Posterior cingulate gyrus (tissue), 11 donors: ENCODE measurements at regions of chr10 and their contacts with region 1.

Region 1: GRCh38 chr10:5519054-5519453 is 5.7 kb upstream of the CALML3 start:
- DNase-seq: no peak

Region 2: DNA sequence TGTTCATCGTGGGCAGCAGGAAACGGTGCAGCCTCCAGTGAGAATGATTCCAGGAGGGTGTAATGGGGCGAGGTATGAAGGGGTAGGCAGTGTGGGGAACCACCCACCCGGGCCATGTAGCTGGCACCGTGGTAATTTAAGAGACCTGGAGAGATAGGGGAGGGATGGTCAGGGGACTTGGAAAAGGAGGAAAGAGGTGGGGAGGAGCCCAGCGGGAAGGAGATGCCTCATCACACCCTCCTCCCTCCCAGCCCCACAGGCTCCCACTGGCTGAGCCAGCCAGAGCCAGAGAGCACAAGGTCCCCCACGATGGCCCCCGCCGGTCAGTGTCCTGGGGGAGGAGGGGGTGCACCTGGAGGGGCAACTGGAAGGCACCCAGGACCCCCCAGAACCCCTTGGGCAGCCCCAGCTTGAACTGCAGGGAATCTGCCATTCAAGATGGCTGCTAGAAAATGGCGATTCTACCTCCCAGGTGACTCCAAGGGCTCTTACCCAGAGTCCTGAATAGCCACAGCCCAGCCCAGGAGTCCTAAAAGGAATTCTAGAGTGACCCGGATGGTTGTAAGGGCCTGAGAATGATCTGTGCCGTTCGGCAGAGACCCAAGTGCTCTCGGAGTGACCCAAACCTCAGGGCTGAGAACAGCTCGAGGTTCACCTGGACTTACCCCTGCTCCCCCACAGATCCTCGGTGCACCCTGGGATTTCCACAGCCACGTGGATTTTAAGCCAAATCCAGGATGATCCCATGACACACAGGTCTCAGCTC is 34.5 kb after region 1 on chr10:
- intact Hi-C with region 1: loop called (anchors 1 kb)
- DNase-seq: peak in 3 of 10 donors; percentile 6 to 82 (median 62)

Region 3: DNA sequence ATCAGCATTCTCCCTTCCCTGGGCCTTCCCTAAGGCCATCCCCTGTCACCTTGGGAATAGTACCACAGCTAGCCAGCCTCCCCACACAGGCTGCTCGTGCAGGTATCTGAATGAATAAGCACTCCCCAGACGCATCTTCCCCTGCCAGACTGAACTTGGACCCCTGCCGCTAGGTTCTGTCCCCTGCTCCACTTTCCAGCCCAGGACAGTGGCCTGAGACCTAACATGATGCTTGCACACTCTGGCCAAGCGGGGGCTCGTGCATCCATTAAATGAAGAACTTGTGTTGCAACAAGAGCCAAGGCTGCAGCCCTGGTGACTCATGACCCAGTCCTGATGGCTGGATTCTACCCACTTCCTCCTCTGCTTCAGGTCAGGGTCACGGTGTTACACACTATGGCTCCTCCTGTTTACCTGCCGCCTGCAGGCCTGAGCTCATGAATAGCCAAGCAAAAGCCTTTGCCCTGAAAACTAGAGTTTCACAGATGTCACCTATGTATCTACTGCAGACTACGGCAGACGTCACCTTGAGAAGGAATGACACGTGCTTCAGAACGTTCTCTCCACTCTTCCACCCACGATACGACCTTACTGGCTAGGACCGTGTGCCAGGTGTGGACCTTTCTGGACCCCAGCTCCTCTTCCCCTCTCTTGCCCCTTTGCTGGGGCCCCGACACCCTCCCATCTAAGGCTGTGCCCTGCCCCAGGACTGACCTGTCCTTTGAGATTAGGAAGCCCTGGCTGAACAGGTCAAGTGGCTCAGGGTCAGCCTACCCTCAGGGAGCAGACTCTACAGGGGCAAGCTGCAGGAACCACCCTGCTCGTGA is 140.9 kb after region 1 on chr10:
- intact Hi-C with region 1: no loop called
- DNase-seq: no peak

Region 4: GRCh38 chr10:5732141-5732540 is 213.1 kb after region 1 on chr10:
- intact Hi-C with region 1: no loop called
- DNase-seq: no peak